Ovary (tissue), 10 donors: ENCODE measurements at regions of chr6 and their contacts with region 1.

Region 1: DNA sequence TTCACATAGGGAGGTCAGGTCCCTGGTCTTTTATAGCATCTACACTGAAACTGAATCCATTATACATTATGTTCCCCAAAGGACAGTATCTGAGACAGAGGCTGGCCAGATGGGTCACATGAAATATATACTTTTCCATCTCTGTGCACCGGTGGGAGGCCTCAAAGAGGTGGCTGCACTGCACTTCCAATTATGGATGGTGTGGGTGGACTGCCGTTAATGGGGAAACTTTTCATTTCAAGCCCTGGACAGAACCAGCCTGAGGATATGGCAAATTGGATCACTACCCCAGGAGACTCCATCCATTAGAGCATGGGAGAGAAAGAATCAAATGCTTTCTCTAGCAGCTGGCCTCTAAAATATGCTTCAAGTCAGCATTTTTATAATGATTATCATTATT is 280.5 kb upstream of the OPRM1 start:
- DNase-seq: no peak
- H3K4me3 ChIP-seq: no peak overlapping the region
- H3K27ac ChIP-seq: no peak overlapping the region
- H3K4me1 ChIP-seq: no peaks in the 10 kb centered on the region
- H3K27me3 ChIP-seq: no peaks in the 10 kb centered on the region
- CTCF ChIP-seq: no peak
- EP300 ChIP-seq: no peak
- POLR2A ChIP-seq: no peak

Region 2: DNA sequence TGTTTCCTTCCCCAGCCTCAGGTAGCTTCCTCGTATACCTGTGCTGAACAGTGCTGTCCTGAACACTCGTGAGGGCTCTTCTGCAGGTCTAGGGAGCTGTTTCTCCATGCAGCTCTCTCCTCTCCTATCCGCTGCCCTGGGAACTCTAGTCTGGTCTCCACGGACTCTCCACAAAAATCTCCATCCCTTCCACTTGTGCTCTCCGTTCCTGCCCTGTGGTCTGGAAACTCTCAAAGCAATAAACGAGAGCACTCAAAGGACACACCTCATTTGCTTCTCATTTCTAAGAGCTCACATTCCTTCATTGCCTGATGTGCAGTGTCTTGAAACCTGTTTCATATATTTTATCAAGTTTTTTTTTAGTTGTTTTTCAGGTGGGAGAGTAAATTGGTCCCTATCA is 391.5 kb before region 1 on chr6:
- intact Hi-C with region 1: loop called in 1 of 4 experiments (anchors 5 kb)
- DNase-seq: no peak
- H3K4me3 ChIP-seq: no peak overlapping the region
- H3K27ac ChIP-seq: no peak overlapping the region
- H3K4me1 ChIP-seq: no peaks in the 10 kb centered on the region
- H3K27me3 ChIP-seq: no peaks in the 10 kb centered on the region
- CTCF ChIP-seq: no peak
- EP300 ChIP-seq: no peak
- POLR2A ChIP-seq: no peak

Region 3: DNA sequence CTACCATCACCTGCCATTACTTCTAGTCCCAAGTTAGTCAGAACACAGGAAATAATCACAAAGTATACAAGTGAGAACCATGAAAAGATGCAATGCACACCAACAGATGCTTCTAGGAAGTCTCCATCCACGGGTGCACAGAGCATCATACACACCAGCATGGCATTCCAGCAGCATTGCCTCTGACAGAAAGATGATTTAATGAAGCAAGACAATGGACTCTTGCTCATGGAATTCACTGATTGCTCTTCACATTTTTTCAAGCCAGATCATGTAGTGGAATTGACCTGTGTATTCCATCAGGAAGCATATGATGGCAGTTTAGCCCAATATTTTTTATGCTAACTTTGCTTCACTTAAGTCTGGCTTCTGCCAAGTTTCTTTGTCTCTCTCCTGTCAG is 221.1 kb before region 1 on chr6:
- intact Hi-C with region 1: no loop called
- DNase-seq: no peak
- H3K4me3 ChIP-seq: no peak overlapping the region
- H3K27ac ChIP-seq: no peak overlapping the region
- H3K4me1 ChIP-seq: no peaks in the 10 kb centered on the region
- H3K27me3 ChIP-seq: no peaks in the 10 kb centered on the region
- CTCF ChIP-seq: no peak
- EP300 ChIP-seq: no peak
- POLR2A ChIP-seq: no peak

Region 4: DNA sequence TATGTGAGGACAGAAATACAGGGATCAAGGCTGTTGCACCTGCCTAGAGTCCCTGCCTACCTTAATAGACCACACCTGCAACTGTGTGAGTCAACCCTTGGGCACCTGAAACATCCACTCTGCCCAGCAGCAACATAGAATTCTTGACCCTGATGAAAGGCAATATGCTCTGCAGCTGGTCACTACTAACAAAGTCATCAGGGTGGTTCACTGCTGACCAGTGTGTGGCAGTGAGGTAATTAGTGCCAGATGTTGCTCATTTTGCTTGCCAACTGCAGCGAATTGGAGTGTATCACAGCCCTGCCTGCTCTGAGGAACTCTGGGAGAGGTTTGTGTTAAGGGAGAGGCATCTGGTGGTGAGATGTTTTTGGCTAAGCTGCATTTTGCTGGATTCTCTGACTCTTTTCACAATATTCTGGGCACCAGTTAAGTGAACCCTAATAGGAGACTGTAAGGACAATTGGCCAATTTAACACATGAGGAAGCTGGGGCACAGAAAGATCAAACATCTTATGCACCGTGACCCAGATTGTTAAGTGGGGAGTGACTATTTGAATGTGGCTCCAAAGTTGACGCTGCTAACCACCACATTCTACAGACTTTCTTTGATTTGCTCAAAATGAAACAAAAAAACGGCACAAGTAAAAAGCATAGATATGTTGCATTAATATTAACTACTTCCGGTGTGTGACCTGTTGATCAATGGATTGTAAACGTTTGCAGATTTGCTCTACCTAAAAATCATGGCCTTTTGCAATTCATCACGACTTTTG is 218.6 kb after region 1 on chr6:
- intact Hi-C with region 1: loop called in 1 of 4 experiments (anchors 5 kb)
- DNase-seq: no peak
- H3K4me3 ChIP-seq: no peak overlapping the region
- H3K27ac ChIP-seq: no peak overlapping the region
- H3K4me1 ChIP-seq: no peaks in the 10 kb centered on the region
- H3K27me3 ChIP-seq: no peaks in the 10 kb centered on the region
- CTCF ChIP-seq: no peak
- EP300 ChIP-seq: no peak
- POLR2A ChIP-seq: no peak